Activated B cell treated with CpG ODN at 0.5 μM for 24 hours (primary cell): ENCODE measurements at regions of chr3 and their contacts with region 1.

Region 1: DNA sequence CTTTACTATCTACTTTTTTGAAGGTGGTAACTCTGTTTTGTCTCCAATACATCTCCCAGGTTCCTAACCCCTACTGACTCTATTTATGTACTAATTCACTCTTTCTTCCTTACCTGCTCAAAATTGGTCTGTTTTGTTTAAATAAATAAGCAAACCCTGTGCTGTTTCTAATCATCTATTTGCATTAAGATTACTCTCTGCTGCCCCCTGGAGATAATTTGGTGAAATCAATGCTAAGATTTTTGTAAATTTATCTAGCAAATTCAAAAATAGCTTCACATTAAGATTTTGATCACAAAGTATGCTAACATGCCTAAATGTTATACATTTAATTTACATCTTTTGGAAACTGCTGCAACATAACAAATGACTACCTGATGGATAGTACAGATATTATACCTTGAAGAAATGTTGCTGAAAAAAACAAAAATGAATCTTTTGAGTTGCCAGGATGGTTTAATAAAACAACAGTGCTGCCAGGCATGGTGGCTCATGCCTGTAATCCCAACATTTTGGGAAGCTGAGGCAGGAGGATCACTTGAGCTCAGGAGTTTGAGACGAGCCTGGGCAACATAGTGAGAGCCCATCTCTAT is 4.4 kb upstream of the CD200R1 start:
- DNase-seq: no peak
- ATAC-seq: no peak
- H3K4me3 Mint-ChIP-seq: no peak overlapping the region
- H3K27ac Mint-ChIP-seq: no peak overlapping the region
- H3K4me1 Mint-ChIP-seq: peaks cover 81% of the 10 kb centered on the region
- H3K27me3 Mint-ChIP-seq: no peaks in the 10 kb centered on the region
- CTCF ChIP-seq: peak; percentile 31

Region 2: GRCh38 chr3:112582244-112582874 is 397.0 kb before region 1 on chr3:
- CTCF ChIA-PET with region 1: interaction called, 12 read pairs
- POLR2A ChIA-PET with region 1: no interaction called
- intact Hi-C with region 1: loop called (anchors 2 kb)
- DNase-seq: no peak
- ATAC-seq: no peak
- H3K4me3 Mint-ChIP-seq: no peak overlapping the region
- H3K27ac Mint-ChIP-seq: no peak overlapping the region
- H3K4me1 Mint-ChIP-seq: peaks cover 42% of the 10 kb centered on the region
- H3K27me3 Mint-ChIP-seq: no peaks in the 10 kb centered on the region
- CTCF ChIP-seq: peak; percentile 59

Region 3: DNA sequence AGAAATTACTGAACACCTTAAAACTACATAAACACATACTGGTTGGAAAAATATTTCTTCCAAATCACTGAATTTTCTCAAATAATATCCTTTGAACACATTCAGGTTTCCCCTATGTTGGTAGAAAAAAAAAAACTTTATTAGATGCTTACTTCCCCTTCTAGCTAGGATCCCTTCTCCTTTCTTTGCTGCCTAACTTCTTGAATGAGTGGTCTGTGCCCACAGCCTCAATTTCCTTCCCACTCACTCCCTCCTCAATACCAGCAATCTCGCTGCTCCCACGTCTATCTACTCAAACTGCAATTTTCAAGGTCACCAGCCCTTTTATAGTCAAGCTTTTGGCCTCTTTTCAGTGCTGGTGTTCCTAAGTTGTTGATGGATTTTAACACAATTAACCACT is 12.7 kb before region 1 on chr3:
- CTCF ChIA-PET with region 1: interaction called, 15 read pairs
- POLR2A ChIA-PET with region 1: no interaction called
- intact Hi-C with region 1: no loop called
- DNase-seq: no peak
- ATAC-seq: peak; percentile 31
- H3K4me3 Mint-ChIP-seq: no peak overlapping the region
- H3K27ac Mint-ChIP-seq: no peak overlapping the region
- H3K4me1 Mint-ChIP-seq: peaks cover 50% of the 10 kb centered on the region
- H3K27me3 Mint-ChIP-seq: no peaks in the 10 kb centered on the region
- CTCF ChIP-seq: no peak

Region 4: DNA sequence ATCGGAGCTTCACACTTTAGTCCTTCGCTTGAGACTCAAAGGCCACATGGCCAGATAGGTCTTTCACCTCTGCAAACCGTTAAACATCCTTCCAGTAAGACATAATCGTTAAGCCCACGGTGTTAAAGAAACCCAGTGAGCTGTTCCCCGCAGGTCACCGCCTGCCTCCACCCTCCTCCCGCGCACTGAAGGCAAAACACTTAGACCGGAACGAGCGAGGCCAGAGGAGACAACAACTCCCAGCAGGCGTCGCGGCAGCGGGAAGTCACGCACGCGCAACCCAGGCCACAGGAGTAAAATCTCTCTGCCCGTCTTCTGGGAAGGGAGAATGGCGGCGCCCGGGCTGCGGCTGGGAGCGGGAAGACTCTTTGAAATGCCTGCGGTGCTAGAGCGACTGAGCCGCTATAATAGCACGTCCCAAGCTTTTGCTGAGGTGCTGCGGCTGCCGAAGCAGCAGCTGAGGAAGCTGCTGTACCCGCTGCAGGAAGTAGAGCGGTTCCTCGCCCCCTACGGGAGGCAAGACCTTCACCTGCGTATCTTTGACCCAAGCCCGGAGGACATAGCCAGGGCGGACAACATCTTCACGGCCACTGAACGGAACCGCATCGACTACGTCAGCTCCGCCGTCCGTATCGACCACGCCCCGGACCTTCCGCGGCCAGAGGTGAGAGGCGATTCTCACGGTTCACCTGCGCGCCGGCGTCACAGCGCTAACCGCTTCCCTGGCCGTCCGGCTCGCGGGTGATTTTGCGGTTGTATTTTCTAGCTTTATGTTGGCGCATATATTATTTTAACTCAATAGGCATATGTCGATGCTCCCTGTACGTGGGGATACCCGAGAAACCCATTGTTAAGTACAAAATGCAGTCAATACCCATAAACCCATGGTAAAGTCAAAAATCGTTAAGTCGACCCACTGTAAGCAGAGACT is 11.6 kb after region 1 on chr3 and contains the start of gene GTPBP8:
- CTCF ChIA-PET with region 1: interaction called, 15 read pairs
- POLR2A ChIA-PET with region 1: interaction called, 3 read pairs
- intact Hi-C with region 1: loop called (anchors 1 kb)
- DNase-seq: peak; percentile 79
- ATAC-seq: peak; percentile 86
- H3K4me3 Mint-ChIP-seq: peak within 1 kb of the TSS; percentile 92
- H3K27ac Mint-ChIP-seq: peak within 1 kb of the TSS; percentile 92
- H3K4me1 Mint-ChIP-seq: peaks cover 27% of the 10 kb centered on the region
- H3K27me3 Mint-ChIP-seq: no peaks in the 10 kb centered on the region
- CTCF ChIP-seq: no peak
- total RNA-seq, gene GTPBP8: 14.3 and 18.1 TPM in 2 replicates